A673 (cell line): ENCODE measurements at regions of chr10 and their contacts with region 1.

Region 1: DNA sequence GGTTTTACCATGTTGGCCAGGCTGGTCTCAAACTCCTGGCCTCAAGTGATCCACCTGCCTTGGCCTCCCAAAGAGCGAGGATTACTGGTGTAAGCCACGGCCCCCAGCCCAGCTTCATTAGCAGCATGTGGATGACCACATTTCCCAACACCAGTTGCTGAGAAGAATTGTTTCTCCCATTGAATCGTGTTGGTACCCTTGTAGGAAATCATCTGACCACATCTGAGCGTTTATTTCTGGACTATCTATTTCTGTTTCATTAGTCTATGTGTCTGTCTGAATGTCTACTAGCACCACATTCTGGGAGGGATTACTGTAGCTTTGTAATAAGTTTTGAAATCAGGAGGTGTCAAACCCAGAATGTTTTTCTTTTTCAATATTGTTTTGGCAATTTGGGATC is 89.6 kb downstream of the LCOR start:
- DNase-seq: no peak
- H3K4me3 ChIP-seq: no peak overlapping the region
- H3K27ac ChIP-seq: no peak overlapping the region
- H3K4me1 ChIP-seq: no peaks in the 10 kb centered on the region
- H3K27me3 ChIP-seq: no peaks in the 10 kb centered on the region
- CTCF ChIP-seq: no peak

Region 2: DNA sequence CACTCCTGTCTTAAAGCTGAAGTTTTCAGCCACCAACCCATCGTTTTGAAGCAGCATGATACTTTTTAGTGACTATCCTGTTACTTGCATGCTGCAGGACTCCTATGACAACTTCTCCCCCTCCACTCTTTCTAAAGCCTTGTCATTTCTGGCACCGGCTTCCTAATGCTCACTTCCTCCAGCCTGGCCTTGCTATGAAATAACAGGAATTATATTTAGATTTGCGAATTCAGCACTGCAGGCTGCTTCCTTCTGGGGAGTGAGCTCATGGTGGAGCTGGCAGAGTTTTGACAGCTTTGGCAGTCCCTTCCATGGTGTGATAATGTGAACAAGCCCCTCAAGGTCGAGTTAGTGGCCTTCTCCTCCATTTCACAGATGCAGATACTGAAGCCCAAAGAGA is 663.7 kb before region 1 on chr10:
- CTCF ChIA-PET with region 1: no interaction called
- POLR2A ChIA-PET with region 1: no interaction called
- intact Hi-C with region 1: no loop called
- DNase-seq: no peak
- H3K4me3 ChIP-seq: no peak overlapping the region
- H3K27ac ChIP-seq: no peak overlapping the region
- H3K4me1 ChIP-seq: no peaks in the 10 kb centered on the region
- H3K27me3 ChIP-seq: no peaks in the 10 kb centered on the region
- CTCF ChIP-seq: no peak

Region 3: GRCh38 chr10:96700374-96701099 is 221.1 kb before region 1 on chr10:
- CTCF ChIA-PET with region 1: no interaction called
- POLR2A ChIA-PET with region 1: no interaction called
- intact Hi-C with region 1: no loop called
- DNase-seq: no peak
- H3K4me3 ChIP-seq: no peak overlapping the region
- H3K27ac ChIP-seq: no peak overlapping the region
- H3K4me1 ChIP-seq: no peaks in the 10 kb centered on the region
- H3K27me3 ChIP-seq: no peaks in the 10 kb centered on the region
- CTCF ChIP-seq: no peak

Region 4: DNA sequence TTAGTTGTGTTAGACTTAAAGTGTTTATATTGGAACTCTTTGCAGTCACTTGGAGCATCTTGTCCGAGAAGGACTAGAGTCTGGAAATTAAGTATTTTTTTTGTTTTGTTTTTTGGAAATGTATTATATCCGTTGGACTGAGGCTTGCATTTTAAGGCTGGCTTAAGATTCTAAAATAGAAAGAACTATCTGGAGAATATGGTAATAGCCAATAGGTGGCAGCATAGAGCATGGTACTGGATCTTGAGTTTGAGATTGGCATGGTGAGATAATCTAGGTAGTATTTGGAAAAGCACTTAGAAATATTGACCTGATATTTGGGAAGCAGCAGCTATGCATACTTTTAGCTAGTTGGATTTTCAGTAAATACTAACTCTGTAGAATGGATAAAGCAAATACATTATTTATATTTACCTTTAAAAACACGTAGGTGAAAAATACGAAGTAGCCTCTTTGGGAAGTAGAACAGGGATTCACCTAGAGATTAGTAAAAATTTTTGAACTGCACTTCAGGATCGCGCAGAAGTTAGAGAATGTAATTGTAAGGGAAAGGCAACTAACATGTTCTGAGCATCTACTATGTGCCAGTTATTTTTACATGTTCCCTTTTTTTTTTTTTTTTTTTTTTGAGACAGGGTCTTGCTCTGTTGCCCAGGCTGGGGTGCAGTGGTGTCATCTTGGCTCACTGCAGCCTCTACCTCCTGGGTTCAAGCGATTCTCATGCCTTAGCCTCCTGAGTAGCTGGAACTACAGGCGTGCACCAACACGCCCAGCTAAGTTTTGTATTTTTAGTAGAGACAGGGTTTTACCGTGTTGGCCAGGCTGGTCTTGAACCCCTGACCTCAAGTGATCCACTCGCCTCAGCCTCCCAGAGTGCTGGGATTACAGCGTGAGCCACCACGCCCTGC is 10.9 kb before region 1 on chr10:
- CTCF ChIA-PET with region 1: interaction called, 12 read pairs
- POLR2A ChIA-PET with region 1: no interaction called
- intact Hi-C with region 1: no loop called
- DNase-seq: peak; percentile 58
- H3K4me3 ChIP-seq: no peak overlapping the region
- H3K27ac ChIP-seq: no peak overlapping the region
- H3K4me1 ChIP-seq: no peaks in the 10 kb centered on the region
- H3K27me3 ChIP-seq: no peaks in the 10 kb centered on the region
- CTCF ChIP-seq: peak; percentile 79